Activated naive CD4-positive, alpha-beta T cell treated with anti-CD3 and anti-CD28 coated beads for 36 hours (primary cell): ENCODE measurements at regions of chr2 and their contacts with region 1.

Region 1: GRCh38 chr2:58501371-58502160 is 260.4 kb upstream of the FANCL start:
- DNase-seq: no peak
- H3K4me3 Mint-ChIP-seq: no peak overlapping the region
- H3K27ac Mint-ChIP-seq: no peak overlapping the region
- H3K4me1 Mint-ChIP-seq: no peaks in the 10 kb centered on the region
- H3K27me3 Mint-ChIP-seq: peaks cover 4% of the 10 kb centered on the region

Region 2: GRCh38 chr2:58553937-58554336 is 52.4 kb after region 1 on chr2:
- CTCF ChIA-PET with region 1: no interaction called
- intact Hi-C with region 1: no loop called
- DNase-seq: peak; percentile 9
- H3K4me3 Mint-ChIP-seq: no peak overlapping the region
- H3K27ac Mint-ChIP-seq: no peak overlapping the region
- H3K4me1 Mint-ChIP-seq: no peaks in the 10 kb centered on the region
- H3K27me3 Mint-ChIP-seq: no peaks in the 10 kb centered on the region

Region 3: GRCh38 chr2:58957188-58957840 is 455.7 kb after region 1 on chr2:
- CTCF ChIA-PET with region 1: no interaction called
- intact Hi-C with region 1: loop called (anchors 5 kb)
- DNase-seq: no peak
- H3K4me3 Mint-ChIP-seq: no peak overlapping the region
- H3K27ac Mint-ChIP-seq: no peak overlapping the region
- H3K4me1 Mint-ChIP-seq: no peaks in the 10 kb centered on the region
- H3K27me3 Mint-ChIP-seq: no peaks in the 10 kb centered on the region